PC-3 (cell line): ENCODE measurements at regions of chr16 and their contacts with region 1.

Region 1: GRCh38 chr16:84186685-84187437 is at the start of gene TAF1C:
- DNase-seq: peak; percentile 92
- ATAC-seq: peak; percentile 92
- H3K4me3 ChIP-seq: peak within 1 kb of the TSS; percentile 95
- H3K27ac ChIP-seq: no peak within 1 kb of the TSS
- H3K4me1 ChIP-seq: no peaks in the 10 kb centered on the region
- H3K27me3 ChIP-seq: no peaks in the 10 kb centered on the region
- CTCF ChIP-seq: peak; percentile 85
- total RNA-seq, gene TAF1C: 21.8 and 28.0 TPM in 2 replicates

Region 2: GRCh38 chr16:84091460-84091859 is 95.4 kb before region 1 on chr16:
- CTCF ChIA-PET with region 1: no interaction called
- POLR2A ChIA-PET with region 1: no interaction called
- intact Hi-C with region 1: no loop called
- DNase-seq: no peak
- ATAC-seq: no peak
- H3K4me3 ChIP-seq: no peak overlapping the region
- H3K27ac ChIP-seq: no peak overlapping the region
- H3K4me1 ChIP-seq: peaks cover 5% of the 10 kb centered on the region
- H3K27me3 ChIP-seq: no peaks in the 10 kb centered on the region
- CTCF ChIP-seq: no peak

Region 3: DNA sequence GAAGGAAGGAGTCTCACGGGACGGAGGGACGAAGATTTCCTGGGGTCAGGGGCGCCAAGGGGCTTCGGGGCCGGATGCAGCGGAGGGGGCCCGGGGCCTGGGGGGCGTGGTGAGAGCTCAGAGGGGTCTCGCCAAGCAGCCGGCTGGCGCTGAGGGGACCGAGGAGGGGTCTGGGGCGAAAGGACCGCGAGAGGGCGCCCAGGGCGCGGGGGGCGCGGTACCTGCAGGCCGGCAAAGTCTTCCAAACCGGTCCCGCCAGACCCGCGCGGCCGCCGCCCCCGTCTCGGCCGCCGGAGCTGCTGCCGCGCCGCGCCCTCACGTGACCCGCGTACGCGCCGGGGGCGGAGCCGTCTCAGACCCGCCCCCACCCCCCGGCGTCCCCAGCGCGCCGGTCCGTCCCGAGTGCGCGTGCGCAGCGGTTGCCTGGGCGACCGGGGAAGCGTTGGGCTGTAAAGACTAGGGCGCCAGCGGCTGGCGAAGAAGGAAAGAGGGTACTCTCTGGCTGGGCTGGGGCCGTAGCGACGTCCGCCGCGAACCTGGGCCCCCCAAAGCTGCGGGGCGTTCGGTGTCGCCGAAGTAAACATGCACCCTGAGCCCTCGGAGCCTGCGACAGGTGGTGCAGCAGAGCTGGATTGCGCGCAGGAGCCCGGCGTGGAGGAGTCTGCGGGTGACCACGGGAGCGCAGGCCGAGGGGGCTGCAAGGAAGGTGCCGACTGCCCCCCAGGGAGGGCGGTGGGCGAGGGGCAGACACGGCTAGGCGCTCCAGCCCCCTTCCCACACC is 41.8 kb before region 1 on chr16 and contains the starts of genes DNAAF1 and HSDL1:
- CTCF ChIA-PET with region 1: no interaction called
- POLR2A ChIA-PET with region 1: no interaction called
- intact Hi-C with region 1: loop called (anchors 1 kb)
- DNase-seq: peak; percentile 88
- ATAC-seq: peak; percentile 86
- H3K4me3 ChIP-seq: peak within 1 kb of the TSS; percentile 97
- H3K27ac ChIP-seq: no peak within 1 kb of the TSS
- H3K4me1 ChIP-seq: no peaks in the 10 kb centered on the region
- H3K27me3 ChIP-seq: no peaks in the 10 kb centered on the region
- CTCF ChIP-seq: no peak
- total RNA-seq, gene DNAAF1: not detected in 2 replicates
- total RNA-seq, gene HSDL1: 9.7 and 13.3 TPM in 2 replicates